Tibial artery (tissue), 4 donors: ENCODE measurements at regions of chr7 and their contacts with region 1.

Region 1: GRCh38 chr7:29811586-29811985 is 5.3 kb downstream of the WIPF3 start:
- DNase-seq: no peak
- H3K4me3 ChIP-seq: no peak overlapping the region
- H3K27ac ChIP-seq: no peak overlapping the region
- H3K4me1 ChIP-seq: peaks cover 0 to 31% (median 26%) of the 10 kb centered on the region in 4 donors
- H3K27me3 ChIP-seq: no peaks in the 10 kb centered on the region
- CTCF ChIP-seq: no peak

Region 2: DNA sequence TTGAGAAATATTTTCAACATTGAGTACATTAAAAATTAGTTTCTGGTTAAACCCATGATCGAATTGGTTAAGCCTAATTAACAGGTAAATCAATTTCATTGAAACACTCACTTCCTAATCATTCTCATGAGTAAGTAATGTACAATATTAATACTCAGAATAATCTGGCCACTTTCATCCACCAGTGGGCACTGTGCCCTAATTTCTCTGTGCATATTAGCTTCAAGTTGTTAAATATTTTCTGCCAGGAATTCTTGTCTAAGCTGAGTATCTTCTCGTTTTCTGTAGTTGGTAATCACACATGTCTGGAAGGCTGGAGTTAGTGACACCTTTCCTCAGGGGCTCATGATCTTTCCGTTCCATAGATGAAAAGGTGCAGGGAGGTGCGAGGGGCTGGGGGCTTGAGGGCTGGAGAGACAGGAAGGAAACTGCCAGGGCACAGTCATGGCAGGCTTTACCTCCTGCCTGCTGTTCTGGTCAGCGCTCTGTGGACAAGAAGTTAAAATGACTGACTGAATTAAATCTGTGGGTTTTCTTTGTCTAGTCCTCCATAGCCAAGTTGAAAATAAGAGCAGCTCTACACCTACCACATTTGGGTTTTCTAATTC is 66.6 kb after region 1 on chr7:
- intact Hi-C with region 1: loop called (anchors 10 kb)
- DNase-seq: peak in 1 of 2 donors; percentile 54
- H3K4me3 ChIP-seq: no peak overlapping the region
- H3K27ac ChIP-seq: no peak overlapping the region
- H3K4me1 ChIP-seq: peaks cover 0 to 8% (median 6%) of the 10 kb centered on the region in 4 donors
- H3K27me3 ChIP-seq: no peaks in the 10 kb centered on the region
- CTCF ChIP-seq: peak; percentile 40 to 46

Region 3: GRCh38 chr7:29921404-29922010 is 109.9 kb after region 1 on chr7:
- intact Hi-C with region 1: no loop called
- DNase-seq: no peak
- H3K4me3 ChIP-seq: no peak overlapping the region
- H3K27ac ChIP-seq: no peak overlapping the region
- H3K4me1 ChIP-seq: peaks cover 0 to 1% (median under 1%) of the 10 kb centered on the region in 4 donors
- H3K27me3 ChIP-seq: no peaks in the 10 kb centered on the region
- CTCF ChIP-seq: peak; percentile 83 to 86

Region 4: DNA sequence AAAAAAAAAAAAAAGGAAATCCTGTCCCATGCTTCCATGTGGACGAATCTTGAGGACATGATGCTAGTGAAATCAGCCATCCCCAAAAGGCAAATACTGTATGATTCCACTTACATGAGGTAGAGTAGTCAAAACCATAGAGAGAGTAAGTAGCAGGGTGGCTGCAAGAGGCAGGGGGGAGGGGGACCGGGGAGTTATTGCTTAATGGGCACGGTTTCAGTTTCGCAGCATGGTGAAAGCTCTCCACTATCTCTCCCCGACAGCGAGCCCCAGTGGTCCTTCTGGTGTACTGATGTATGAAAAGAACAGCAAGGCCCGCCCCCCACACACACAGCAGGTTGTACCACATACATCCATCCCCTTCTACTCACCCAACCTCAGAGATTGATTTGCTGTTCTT is 634.2 kb after region 1 on chr7:
- intact Hi-C with region 1: no loop called
- DNase-seq: peak; percentile 82 to 83
- H3K4me3 ChIP-seq: no peak overlapping the region
- H3K27ac ChIP-seq: no peak overlapping the region
- H3K4me1 ChIP-seq: no peaks in the 10 kb centered on the region
- H3K27me3 ChIP-seq: no peaks in the 10 kb centered on the region
- CTCF ChIP-seq: peak; percentile 17 to 39